Spleen (tissue), 13 donors: ENCODE measurements at regions of chr1 and their contacts with region 1.

Region 1: DNA sequence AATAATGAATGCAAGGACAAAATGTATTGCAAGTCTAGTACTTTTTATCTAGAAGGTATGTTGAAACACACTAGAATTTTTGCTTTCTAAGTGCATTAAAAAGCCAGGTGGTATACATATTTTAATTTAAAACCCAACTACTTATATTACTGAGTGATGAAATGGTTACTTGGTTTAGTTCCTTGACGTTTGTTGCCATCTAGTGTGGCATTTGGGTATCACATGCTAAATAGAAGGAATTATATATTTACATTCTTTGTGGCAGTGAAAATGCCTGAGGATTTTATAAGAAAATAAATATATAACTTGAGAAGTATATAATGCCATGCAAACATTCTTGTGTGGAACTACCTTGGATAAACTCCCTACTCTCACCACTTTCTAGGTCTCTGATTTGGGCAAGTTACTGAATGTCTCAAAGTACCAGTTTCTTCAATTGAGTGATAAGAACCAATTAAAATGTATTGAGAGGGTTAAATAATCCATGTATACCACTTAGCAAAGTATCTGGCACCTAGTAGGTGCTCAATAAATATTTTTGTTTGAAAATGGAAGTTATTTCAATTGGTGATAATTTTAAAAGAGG is 69.6 kb downstream of the SDCCAG8 start:
- DNase-seq: no peak
- H3K4me3 ChIP-seq: no peak overlapping the region
- H3K27ac ChIP-seq: no peak overlapping the region
- H3K4me1 ChIP-seq: no peaks in the 10 kb centered on the region
- H3K27me3 ChIP-seq: no peaks in the 10 kb centered on the region
- CTCF ChIP-seq: peak; percentile 43 to 83 (median 77)
- POLR2A ChIP-seq: no peak

Region 2: GRCh38 chr1:242467556-242468145 is 857.7 kb before region 1 on chr1:
- intact Hi-C with region 1: loop called (anchors 10 kb)
- DNase-seq: no peak
- H3K4me3 ChIP-seq: no peak overlapping the region
- H3K27ac ChIP-seq: no peak overlapping the region
- H3K4me1 ChIP-seq: no peaks in the 10 kb centered on the region
- H3K27me3 ChIP-seq: no peaks in the 10 kb centered on the region
- CTCF ChIP-seq: peak in 10 of 11 experiments; percentile 23 to 64 (median 50)
- POLR2A ChIP-seq: no peak

Region 3: GRCh38 chr1:243421784-243422183 is 96.4 kb after region 1 on chr1:
- intact Hi-C with region 1: no loop called
- DNase-seq: no peak
- H3K4me3 ChIP-seq: peak overlapping the region in 1 of 8 donors; percentile 27
- H3K27ac ChIP-seq: no peak overlapping the region
- H3K4me1 ChIP-seq: peaks cover 0 to 23% (median 13%) of the 10 kb centered on the region in 6 donors
- H3K27me3 ChIP-seq: no peaks in the 10 kb centered on the region
- CTCF ChIP-seq: no peak
- POLR2A ChIP-seq: no peak

Region 4: DNA sequence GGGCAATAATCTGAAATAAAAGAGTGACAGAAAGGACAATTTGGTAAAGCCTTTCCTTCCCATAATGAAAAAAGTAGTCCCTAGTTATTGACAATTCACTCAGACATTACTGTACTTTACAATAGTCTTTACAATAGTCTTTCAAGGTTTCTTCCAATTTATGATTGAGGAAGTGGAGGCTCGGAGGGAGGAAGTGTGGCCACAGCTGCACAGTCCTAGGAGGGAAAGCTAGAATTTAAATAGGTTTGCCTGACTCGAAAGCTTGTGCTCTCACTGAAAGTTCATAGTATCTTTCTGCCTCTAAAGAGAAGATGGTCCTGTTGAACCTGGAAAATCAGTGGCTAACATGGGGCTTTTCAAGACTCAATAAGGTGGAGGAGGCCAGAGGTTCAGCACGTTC is 133.7 kb after region 1 on chr1:
- intact Hi-C with region 1: no loop called
- DNase-seq: no peak
- H3K4me3 ChIP-seq: no peak overlapping the region
- H3K27ac ChIP-seq: no peak overlapping the region
- H3K4me1 ChIP-seq: peaks cover 0 to 14% (median 11%) of the 10 kb centered on the region in 6 donors
- H3K27me3 ChIP-seq: no peaks in the 10 kb centered on the region
- CTCF ChIP-seq: no peak
- POLR2A ChIP-seq: no peak

Region 5: DNA sequence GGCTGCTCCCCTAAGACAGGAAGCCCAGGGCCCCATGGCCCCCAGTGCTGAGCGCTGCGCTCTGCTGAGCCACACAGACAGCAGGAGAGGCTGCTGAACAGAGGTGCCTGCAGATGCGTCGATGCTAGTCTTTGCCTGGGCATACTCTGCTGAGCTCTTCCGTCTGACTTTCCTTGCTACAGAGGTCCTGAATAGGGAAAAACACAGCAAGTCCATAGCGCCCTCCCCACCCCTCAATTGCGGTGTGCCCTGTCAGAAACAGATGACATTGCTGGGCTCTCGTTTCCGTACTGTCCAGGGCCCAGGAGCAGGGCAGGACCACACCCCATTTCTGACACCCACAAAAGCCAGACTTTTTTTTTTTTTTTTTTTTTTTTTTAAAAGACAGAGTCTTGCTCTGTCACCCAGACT is 182.9 kb after region 1 on chr1:
- intact Hi-C with region 1: no loop called
- DNase-seq: peak; percentile 92
- H3K4me3 ChIP-seq: peak overlapping the region in 1 of 8 donors; percentile 28
- H3K27ac ChIP-seq: peak overlapping the region in 6 of 8 donors; percentile 1 to 72 (median 60)
- H3K4me1 ChIP-seq: peaks cover 12 to 39% (median 29%) of the 10 kb centered on the region in 6 donors
- H3K27me3 ChIP-seq: no peaks in the 10 kb centered on the region
- CTCF ChIP-seq: no peak
- POLR2A ChIP-seq: no peak